Left lung (tissue), 14 donors: ENCODE measurements at regions of chr1 and their contacts with region 1.

Region 1: DNA sequence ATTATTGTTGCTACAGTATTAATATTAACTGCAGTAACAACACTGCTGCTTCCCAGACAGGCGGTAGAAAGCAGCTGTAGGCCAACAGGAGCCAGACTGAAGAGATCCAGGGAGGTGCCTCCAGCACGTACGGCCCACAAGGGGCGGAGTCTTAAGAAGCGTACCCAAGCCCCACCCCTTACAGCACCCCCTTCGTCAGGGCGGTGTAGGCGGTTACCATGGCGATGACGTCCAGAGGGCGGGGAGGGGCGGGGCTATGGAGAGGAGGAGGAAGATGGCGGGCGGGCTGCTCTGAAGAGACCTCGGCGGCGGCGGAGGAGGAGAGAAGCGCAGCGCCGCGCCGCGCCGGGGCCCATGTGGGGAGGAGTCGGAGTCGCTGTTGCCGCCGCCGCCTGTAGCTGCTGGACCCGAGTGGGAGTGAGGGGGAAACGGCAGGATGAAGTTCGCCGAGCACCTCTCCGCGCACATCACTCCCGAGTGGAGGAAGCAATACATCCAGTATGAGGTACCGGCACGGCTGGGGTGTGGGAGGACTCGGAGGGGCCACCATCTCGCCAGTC is at the start of gene XPR1:
- DNase-seq: peak; percentile 98 to 100 (median 99)
- ATAC-seq: peak; percentile 99
- H3K4me3 ChIP-seq: peak within 1 kb of the TSS; percentile 86 to 93
- H3K27ac ChIP-seq: peak within 1 kb of the TSS; percentile 89 to 91
- H3K4me1 ChIP-seq: peaks cover 16 to 29% of the 10 kb centered on the region in 2 donors
- H3K27me3 ChIP-seq: no peaks in the 10 kb centered on the region
- CTCF ChIP-seq: peak; percentile 15 to 45
- polyA plus RNA-seq, gene XPR1: 24.6 to 32.4 (median 26.7) TPM

Region 2: DNA sequence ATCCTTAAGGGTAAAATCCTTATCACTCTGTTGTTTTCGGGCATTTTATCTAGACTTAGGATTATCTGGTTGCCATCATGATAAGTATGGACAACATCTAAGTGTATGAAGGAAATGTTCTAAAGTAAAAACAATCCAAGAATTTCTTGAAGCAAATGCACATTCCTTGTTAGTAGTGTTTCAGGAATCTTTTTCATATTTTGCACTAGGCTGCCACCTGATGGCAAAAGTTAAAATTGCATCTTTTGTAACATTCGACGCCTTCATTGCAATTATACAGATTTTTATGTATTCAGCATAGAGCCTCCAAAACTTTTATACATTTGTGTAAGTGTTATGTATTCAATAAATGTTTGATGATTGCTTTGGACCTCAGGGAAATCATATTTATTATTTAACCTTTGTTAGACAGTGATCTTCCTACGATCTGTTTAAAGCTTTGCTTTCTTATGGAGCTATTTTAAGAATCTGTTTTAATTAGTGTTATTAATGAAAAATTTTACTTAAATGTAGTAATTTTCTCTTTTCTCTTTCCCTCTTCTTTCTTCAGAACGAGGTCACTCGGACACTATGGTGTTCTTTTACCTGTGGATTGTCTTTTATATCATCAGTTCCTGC is 231.4 kb after region 1 on chr1:
- intact Hi-C with region 1: loop called in 1 of 2 experiments (anchors 10 kb)
- DNase-seq: peak in 2 of 4 donors; percentile 51 to 66
- ATAC-seq: peak; percentile 84
- H3K4me3 ChIP-seq: no peak overlapping the region
- H3K27ac ChIP-seq: no peak overlapping the region
- H3K4me1 ChIP-seq: peaks cover 0 to 7% of the 10 kb centered on the region in 2 donors
- H3K27me3 ChIP-seq: no peaks in the 10 kb centered on the region
- CTCF ChIP-seq: peak; percentile 56 to 72